AG04449 (cell line): ENCODE measurements at regions of chr6 and their contacts with region 1.

Region 1: DNA sequence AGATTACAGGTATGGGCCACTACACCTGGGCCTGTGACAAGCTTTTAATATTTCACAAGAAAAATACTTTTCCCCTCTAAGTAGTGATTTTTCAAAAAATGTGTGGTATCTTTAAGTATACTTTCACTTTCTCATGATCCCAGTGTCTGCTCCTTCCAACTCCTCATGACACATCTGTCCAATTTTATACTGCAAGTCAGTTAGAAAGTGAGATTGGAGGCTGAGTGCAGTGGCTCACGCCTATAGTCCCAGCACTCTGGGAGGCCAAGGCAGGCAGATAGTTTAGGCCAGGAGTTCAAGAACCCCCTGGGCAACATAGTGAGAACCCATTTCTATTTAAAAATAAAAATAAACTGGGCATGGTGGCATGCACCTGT is 20.2 kb downstream of the PIM1 start:
- DNase-seq: no peak
- H3K4me3 ChIP-seq: no peak overlapping the region
- CTCF ChIP-seq: no peak

Region 2: DNA sequence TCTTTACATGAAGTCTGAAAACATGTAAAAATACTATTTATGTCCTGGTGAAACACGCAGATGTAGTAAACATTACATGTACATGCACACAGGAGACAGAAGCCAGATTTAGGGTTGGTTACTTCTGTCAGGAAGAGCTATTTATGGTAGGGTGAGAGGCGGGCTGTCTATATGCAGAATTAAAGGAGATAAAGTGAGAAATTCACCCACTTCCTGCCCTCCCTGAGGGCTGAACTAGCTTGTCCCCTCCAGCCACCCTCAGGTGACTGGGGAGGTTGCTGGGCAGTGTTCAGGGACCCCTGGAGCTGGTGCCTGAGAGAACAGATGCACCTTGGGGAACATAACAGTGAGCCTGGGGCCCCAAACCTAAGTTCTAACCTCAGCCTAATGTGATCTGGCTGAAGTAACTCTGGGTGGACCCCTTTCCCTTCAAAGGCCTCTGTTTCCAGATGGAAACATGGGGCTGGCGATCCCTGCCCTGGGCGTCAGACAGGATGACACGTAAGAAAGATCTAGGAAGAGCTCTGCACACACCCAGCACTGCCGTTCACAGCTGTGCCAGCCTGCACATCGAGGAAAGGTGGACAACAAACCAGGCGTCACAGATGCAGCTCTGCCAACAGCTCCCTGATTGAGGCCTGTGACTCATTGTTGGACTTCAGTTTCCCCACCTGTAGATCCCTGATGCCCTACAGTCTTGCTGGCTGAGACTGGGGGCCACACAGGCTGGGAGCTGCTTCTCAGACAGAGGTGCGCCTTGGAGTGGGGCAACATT is 234.3 kb before region 1 on chr6:
- CTCF ChIA-PET with region 1: no interaction called
- POLR2A ChIA-PET with region 1: no interaction called
- DNase-seq: no peak
- H3K4me3 ChIP-seq: no peak overlapping the region
- CTCF ChIP-seq: no peak

Region 3: GRCh38 chr6:37029249-37029971 is 160.7 kb before region 1 on chr6:
- CTCF ChIA-PET with region 1: interaction called, 1,706 read pairs
- POLR2A ChIA-PET with region 1: no interaction called
- DNase-seq: no peak
- H3K4me3 ChIP-seq: no peak overlapping the region
- CTCF ChIP-seq: peak; percentile 79

Region 4: GRCh38 chr6:37131104-37131959 is 58.8 kb before region 1 on chr6:
- CTCF ChIA-PET with region 1: no interaction called
- POLR2A ChIA-PET with region 1: no interaction called
- DNase-seq: no peak
- H3K4me3 ChIP-seq: no peak overlapping the region
- CTCF ChIP-seq: no peak

Region 5: GRCh38 chr6:37177077-37177934 is 12.8 kb before region 1 on chr6:
- CTCF ChIA-PET with region 1: interaction called, 21 read pairs
- POLR2A ChIA-PET with region 1: interaction called, 3 read pairs
- DNase-seq: no peak
- H3K4me3 ChIP-seq: no peak overlapping the region
- CTCF ChIP-seq: no peak

Region 6: GRCh38 chr6:37218511-37218910 is 28.4 kb after region 1 on chr6:
- CTCF ChIA-PET with region 1: no interaction called
- POLR2A ChIA-PET with region 1: no interaction called
- DNase-seq: no peak
- H3K4me3 ChIP-seq: no peak overlapping the region
- CTCF ChIP-seq: no peak

Region 7: DNA sequence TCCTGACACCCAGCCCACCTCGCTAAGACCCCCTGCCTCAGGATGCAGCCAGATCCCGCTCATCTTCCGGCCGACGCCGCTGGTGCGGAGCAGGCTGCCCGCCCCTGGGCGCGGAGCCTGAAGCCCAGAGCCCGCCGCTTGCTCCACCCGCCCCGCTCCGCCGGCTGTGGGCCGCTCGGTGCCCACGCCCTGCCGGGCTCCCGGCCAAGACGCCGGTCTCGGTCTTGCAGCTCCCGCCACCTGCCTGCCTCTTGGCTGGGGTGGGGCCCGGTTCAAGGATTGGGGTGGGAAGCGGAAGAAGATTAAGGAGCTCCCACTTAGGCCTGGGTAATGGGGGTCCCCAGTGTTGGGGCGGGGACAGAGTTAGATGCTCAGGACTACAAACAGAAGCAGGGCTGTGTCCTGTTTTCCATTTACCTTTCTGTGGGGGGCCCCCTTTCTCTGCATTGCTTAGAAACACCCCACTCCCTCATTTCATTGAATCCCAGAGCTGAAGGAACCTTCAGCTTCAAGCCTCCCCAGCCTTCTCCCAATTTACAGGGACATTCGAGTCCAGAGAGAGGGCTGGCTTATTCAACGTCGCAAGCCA is 434.9 kb after region 1 on chr6:
- CTCF ChIA-PET with region 1: no interaction called
- POLR2A ChIA-PET with region 1: no interaction called
- DNase-seq: no peak
- H3K4me3 ChIP-seq: no peak overlapping the region
- CTCF ChIP-seq: no peak